Activated CD8-positive, alpha-beta T cell treated with anti-CD3 and anti-CD28 coated beads for 36 hours (primary cell): ENCODE measurements at regions of chr11 and their contacts with region 1.

Region 1: DNA sequence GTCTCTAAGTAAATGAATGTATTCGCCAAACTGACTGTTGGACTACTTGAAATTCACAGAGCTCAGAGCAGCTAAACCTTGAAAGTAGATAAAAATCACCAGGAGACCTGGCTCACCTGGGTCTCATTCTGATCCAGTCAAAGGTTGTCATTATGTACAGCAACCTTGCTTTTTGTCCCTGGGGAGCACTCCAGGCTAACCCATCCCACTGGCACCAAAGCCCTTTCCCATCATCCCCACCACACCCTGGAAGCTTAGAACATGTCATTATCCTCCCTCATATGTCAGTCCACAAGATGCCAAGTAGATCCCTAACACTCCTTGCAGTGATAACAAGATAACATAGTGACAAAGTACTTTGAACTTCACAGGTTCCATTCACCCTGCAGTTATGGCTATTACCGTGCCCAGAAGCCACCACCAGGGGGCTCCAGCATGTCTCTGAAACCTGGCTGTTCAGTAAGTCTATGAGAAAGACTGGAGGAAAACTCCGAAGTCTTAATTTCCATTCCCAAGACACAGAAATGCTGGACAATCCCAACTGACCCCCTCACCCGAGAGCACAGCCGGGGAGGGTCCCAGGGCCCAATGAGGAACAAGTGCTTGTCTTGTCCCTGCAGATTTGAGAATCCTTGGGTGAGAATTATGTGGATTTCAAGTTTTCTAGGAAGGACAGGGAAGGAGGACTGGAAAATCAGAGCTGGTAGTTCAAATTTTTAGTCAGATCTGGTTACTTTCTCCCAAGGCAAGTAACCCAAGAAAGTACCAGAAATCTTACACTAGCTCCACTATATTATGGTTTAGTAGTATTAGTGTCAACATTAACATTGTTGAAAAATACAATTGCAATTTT is 43.0 kb upstream of the USP47 start:
- DNase-seq: peak; percentile 90
- ATAC-seq: peak; percentile 82
- H3K4me3 Mint-ChIP-seq: no peak overlapping the region
- H3K27ac Mint-ChIP-seq: no peak overlapping the region
- H3K4me1 Mint-ChIP-seq: no peaks in the 10 kb centered on the region
- H3K27me3 Mint-ChIP-seq: peaks cover 19% of the 10 kb centered on the region
- CTCF ChIP-seq: peak; percentile 83

Region 2: GRCh38 chr11:11787305-11788062 is 11.3 kb before region 1 on chr11:
- CTCF ChIA-PET with region 1: interaction called, 21 read pairs
- POLR2A ChIA-PET with region 1: no interaction called
- intact Hi-C with region 1: no loop called
- DNase-seq: peak; percentile 76
- ATAC-seq: peak; percentile 82
- H3K4me3 Mint-ChIP-seq: no peak overlapping the region
- H3K27ac Mint-ChIP-seq: no peak overlapping the region
- H3K4me1 Mint-ChIP-seq: no peaks in the 10 kb centered on the region
- H3K27me3 Mint-ChIP-seq: no peaks in the 10 kb centered on the region
- CTCF ChIP-seq: peak; percentile 92

Region 3: DNA sequence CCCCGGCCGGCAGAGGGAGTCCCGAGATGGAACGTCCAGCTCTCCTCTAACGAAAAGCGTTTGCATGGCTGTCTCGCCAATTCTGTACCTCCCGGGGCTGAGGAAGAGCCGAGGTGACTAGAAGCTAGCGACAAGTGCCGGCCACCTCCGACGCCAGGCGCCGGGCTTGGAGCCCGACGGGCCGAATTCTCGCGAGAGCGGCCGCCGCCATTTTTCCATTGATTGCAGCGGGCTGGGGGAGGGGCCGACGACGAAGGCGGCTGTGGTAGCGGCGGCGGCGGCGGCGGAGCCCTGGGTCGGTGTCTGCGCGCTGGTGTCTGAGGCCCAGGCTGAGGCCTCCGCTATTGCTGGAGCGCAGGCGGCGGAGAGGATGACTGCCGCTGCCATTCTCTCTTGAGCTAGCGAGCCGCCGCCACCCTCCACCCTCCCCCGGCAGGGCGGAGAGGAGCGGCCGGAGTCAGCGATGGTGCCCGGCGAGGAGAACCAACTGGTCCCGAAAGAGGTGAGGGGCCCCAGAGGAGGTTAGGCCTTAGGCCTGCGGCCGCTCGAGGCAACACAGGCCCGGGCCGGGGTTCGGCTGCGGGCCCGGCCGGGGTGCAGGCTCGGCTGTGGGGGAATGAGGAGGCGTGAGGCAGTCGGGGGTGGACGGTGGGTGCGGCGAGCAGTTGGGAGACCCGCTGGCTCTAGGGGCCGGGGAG is 43.1 kb after region 1 on chr11 and contains the start of gene USP47:
- CTCF ChIA-PET with region 1: interaction called, 13 read pairs
- POLR2A ChIA-PET with region 1: no interaction called
- intact Hi-C with region 1: loop called (anchors 5 kb)
- DNase-seq: peak; percentile 94
- ATAC-seq: peak; percentile 71
- H3K4me3 Mint-ChIP-seq: no peak within 1 kb of the TSS
- H3K27ac Mint-ChIP-seq: no peak within 1 kb of the TSS
- H3K4me1 Mint-ChIP-seq: peaks cover 23% of the 10 kb centered on the region
- H3K27me3 Mint-ChIP-seq: peaks cover 6% of the 10 kb centered on the region
- CTCF ChIP-seq: peak; percentile 56
- total RNA-seq, gene USP47: 37.8 to 39.7 TPM

Region 4: DNA sequence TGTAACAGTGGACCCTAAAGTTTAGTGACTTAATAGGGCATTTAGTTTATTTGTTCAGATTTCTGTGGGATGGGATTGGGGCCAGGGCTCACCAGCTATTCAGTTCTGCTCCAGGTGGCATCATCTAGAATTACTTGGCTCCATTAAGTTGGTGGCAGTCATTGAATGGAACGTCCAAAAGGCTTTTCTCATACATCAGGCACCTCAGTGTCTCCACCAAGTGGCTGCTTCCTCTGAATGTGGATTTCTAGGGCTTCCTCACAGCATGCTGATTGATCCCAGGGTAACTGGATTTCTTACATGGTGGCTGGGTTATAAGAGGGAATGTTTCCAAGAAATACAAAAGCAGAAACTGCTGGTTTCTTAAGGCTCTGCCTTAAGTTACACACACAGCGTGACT is 77.6 kb after region 1 on chr11:
- CTCF ChIA-PET with region 1: interaction called, 19 read pairs
- POLR2A ChIA-PET with region 1: no interaction called
- intact Hi-C with region 1: no loop called
- DNase-seq: peak; percentile 33
- ATAC-seq: no peak
- H3K4me3 Mint-ChIP-seq: no peak overlapping the region
- H3K27ac Mint-ChIP-seq: no peak overlapping the region
- H3K4me1 Mint-ChIP-seq: peaks cover 46% of the 10 kb centered on the region
- H3K27me3 Mint-ChIP-seq: no peaks in the 10 kb centered on the region
- CTCF ChIP-seq: no peak

Region 5: GRCh38 chr11:11966826-11967668 is 168.2 kb after region 1 on chr11:
- CTCF ChIA-PET with region 1: interaction called, 9 read pairs
- POLR2A ChIA-PET with region 1: no interaction called
- intact Hi-C with region 1: loop called (anchors 10 kb)
- DNase-seq: peak; percentile 87
- ATAC-seq: peak; percentile 98
- H3K4me3 Mint-ChIP-seq: no peak overlapping the region
- H3K27ac Mint-ChIP-seq: no peak overlapping the region
- H3K4me1 Mint-ChIP-seq: peaks cover 4% of the 10 kb centered on the region
- H3K27me3 Mint-ChIP-seq: no peaks in the 10 kb centered on the region
- CTCF ChIP-seq: peak; percentile 81

Region 6: DNA sequence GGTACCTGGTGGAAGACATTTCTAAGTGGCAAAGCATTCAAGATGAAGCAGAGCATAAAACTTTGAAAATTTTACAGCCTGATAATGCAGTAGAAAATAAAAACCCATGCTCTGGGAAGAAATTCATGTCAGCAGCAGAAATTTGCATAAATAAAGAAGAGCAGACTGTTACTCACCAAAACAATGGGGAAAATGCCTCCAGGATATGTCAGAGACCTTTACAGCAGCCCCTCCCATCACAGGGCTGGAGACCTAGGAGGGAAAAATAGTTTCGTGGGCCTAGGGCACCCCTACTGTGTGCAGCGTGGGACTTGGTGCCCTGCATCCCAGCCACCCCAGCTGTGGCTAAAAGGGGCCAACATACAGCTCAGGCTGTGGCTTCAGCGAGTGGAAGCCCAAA is 215.0 kb after region 1 on chr11:
- CTCF ChIA-PET with region 1: no interaction called
- POLR2A ChIA-PET with region 1: no interaction called
- intact Hi-C with region 1: no loop called
- DNase-seq: no peak
- ATAC-seq: no peak
- H3K4me3 Mint-ChIP-seq: no peak overlapping the region
- H3K27ac Mint-ChIP-seq: no peak overlapping the region
- H3K4me1 Mint-ChIP-seq: peaks cover 5% of the 10 kb centered on the region
- H3K27me3 Mint-ChIP-seq: peaks cover 44% of the 10 kb centered on the region
- CTCF ChIP-seq: no peak

Region 7: DNA sequence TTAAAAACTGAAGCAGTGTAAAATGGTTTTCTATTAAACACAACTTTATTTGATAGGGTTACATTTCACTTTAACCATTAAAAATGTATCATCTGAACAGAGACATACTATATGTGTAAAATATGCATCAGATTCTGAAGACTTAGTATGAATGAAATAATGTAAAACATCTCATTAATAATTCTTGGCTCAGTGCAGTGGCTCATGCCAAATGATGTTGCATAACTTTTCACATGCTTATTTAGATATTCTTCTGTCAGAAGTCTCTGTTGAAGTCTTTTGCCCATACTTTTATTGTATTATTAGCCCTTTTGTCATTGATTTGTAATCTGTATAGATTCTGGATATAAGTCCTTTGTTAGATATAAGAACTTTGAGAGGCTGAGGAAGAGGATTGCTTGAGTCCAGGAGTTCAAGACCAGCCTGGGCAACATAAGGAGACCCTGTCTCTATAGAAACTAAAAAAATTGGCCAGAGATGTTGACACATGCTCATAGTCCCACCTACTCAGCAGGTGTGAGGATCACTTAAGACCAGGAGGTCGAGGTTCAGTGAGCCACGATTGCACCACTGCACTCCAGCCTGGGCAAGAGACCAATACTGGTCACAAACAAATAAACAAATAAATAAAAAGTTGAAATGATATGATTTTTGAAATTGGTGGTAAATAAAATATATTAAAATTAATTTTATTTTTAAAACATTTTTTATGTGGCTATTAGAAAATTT is 504.8 kb after region 1 on chr11:
- CTCF ChIA-PET with region 1: no interaction called
- POLR2A ChIA-PET with region 1: no interaction called
- intact Hi-C with region 1: no loop called
- DNase-seq: no peak
- ATAC-seq: no peak
- H3K4me3 Mint-ChIP-seq: no peak overlapping the region
- H3K27ac Mint-ChIP-seq: no peak overlapping the region
- H3K4me1 Mint-ChIP-seq: no peaks in the 10 kb centered on the region
- H3K27me3 Mint-ChIP-seq: no peaks in the 10 kb centered on the region
- CTCF ChIP-seq: no peak